Activated CD4-positive, alpha-beta T cell treated with anti-CD3 and anti-CD28 coated beads for 36 hours (primary cell): ENCODE measurements at regions of chr10 and their contacts with region 1.

Region 1: GRCh38 chr10:87675396-87676376 is 16.0 kb downstream of the PAPSS2 start:
- DNase-seq: no peak
- ATAC-seq: no peak
- H3K4me3 Mint-ChIP-seq: no peak overlapping the region
- H3K27ac Mint-ChIP-seq: no peak overlapping the region
- H3K4me1 Mint-ChIP-seq: peaks cover 2% of the 10 kb centered on the region
- H3K27me3 Mint-ChIP-seq: peaks cover 6% of the 10 kb centered on the region

Region 2: DNA sequence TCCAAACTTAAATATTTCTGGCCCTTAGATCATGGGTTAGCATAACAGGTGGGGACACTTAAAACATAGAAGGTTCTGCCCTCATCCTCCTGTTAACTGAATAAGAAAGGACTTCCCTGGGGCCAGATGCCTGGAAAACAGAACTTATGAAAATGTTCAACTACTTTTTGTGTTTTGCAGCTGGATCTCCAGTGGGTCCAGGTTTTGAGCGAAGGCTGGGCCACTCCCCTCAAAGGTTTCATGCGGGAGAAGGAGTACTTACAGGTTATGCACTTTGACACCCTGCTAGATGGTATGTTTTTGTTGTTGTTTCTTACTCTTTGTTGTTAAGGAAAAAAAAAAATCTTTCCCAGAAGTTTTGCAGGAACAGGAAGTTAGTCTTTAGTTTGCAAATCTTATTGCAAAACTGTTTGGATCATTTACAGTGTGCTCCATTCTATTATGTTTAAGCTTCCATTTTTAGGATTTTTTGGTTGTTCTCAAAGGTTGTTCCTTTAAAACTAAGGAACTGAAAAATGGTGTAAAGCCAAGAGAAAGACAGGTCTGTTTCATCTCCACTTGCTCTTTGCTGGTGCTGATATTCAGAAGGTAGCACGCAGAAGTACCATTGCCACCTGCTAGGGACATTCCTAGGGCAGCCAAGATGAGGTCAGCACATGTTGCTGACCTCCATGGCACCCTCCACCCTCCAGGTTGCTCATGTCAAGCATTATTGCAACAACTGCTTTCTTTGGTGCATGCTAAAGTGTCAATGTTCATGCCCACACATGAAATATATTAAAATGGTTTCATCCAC is 40.1 kb after region 1 on chr10:
- CTCF ChIA-PET with region 1: no interaction called
- POLR2A ChIA-PET with region 1: no interaction called
- intact Hi-C with region 1: loop called in 1 of 2 experiments (anchors 5 kb)
- DNase-seq: no peak
- ATAC-seq: no peak
- H3K4me3 Mint-ChIP-seq: no peak overlapping the region
- H3K27ac Mint-ChIP-seq: no peak overlapping the region
- H3K4me1 Mint-ChIP-seq: peaks cover 4% of the 10 kb centered on the region
- H3K27me3 Mint-ChIP-seq: no peaks in the 10 kb centered on the region